Thyroid gland (tissue), 4 donors: ENCODE measurements at regions of chr1 and their contacts with region 1.

Region 1: GRCh38 chr1:53945433-53946251 is at the start of gene IFT25:
- DNase-seq: peak; percentile 97
- H3K4me3 ChIP-seq: peak within 1 kb of the TSS; percentile 61 to 87 (median 76)
- H3K27ac ChIP-seq: peak within 1 kb of the TSS; percentile 68 to 87 (median 85)
- H3K4me1 ChIP-seq: peaks cover 22 to 45% of the 10 kb centered on the region in 2 donors
- H3K27me3 ChIP-seq: no peaks in the 10 kb centered on the region
- CTCF ChIP-seq: no peak
- POLR2A ChIP-seq: peak in 1 of 2 donors; percentile 84
- total RNA-seq, gene IFT25: 42.4 to 116 (median 77.7) TPM

Region 2: DNA sequence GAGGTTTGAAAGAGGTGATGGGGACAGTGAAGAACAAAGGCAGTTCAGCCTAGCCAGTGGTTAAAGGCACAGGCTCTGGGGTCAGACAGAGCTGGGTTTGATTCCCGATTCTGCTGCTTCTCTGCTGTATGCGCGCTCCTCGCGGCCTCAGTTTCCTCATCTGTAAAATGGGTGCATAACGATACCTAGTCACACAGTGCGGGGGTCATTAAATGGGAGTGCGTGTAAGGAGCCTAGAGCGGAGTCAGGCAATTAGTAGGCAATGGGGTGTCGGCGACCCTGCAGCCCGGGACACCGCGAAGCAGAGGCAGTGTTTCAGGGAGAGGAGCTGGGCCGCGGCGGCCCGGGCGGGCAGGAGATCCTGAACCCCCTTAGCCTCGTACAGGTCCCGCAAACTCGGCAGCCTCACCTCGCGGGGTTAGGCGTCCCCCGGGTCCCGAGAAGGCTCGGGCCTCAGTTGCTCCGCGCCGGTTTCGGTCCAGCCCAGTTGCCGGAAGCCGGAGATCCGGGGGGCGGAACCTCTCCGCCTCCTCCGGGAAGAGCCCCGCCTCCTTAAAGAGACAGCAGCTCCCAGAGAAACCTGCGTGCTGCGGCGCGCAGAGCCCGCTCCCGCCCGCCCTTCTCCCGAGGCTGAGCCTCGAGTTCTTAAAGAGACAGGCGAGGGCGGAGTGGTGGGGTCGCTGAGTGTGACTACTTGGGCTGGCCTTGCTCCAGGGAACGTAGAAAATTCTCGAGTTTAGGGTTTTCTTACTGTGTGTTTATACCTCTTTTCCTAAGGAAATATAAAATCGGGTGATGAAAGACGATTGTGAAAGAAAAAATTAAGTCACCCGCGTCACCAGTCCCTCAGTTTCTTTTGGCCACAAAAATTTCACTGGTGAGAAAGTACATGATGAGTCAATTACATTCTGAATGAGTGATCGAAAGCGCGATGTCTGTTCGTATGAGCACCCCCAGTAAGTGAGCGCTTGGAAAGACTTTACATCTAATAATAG is 56.0 kb before region 1 on chr1 and contains the start of gene YIPF1:
- intact Hi-C with region 1: loop called (anchors 2 kb)
- DNase-seq: peak; percentile 92 to 94
- H3K4me3 ChIP-seq: peak within 1 kb of the TSS; percentile 76 to 95 (median 90)
- H3K27ac ChIP-seq: peak within 1 kb of the TSS; percentile 67 to 75 (median 73)
- H3K4me1 ChIP-seq: peaks cover 9 to 30% of the 10 kb centered on the region in 2 donors
- H3K27me3 ChIP-seq: no peaks in the 10 kb centered on the region
- CTCF ChIP-seq: peak in 1 of 6 experiments; percentile 18
- POLR2A ChIP-seq: peak in 1 of 2 donors; percentile 55
- total RNA-seq, gene YIPF1: 41.5 to 66.6 (median 61.5) TPM

Region 3: DNA sequence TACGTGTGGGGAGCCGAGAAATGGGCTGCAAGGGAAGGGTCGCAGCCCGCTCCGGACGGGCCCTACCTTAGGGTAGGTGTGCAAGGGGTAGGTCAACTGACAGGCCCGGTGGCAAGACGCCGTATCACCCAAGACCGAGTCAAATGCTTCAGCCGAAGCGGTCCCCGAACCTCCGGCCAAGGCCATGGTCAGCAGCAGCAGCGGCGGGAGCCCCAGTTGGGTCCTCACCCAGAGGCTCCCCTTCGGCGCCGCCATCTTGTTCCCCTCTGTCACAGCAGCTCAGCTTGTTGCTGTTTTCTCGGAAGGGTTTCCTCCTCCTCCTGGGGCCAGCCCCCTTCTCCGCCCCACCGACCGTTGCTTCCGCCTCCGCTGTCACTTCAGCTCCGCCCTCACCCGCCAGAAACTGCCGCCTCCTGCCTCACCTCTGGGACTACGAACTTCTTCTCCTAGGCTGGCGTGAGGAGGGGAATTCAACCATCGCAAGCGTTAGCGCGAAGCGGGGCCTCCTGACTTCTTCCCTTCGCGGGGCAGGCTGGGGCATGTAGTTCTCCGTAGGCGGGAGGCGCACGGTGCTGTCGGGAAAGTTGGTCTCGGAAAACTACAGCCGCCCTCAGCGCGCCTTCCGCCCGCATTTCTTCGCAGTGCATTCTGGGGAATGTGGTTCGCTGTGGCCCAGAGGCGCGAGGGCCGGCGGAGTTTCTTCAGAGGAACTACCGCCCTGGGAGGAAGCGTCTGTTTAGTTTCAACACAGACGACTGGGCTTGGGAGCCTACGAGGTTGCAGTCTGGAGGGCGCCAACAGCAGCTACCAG is 107.5 kb after region 1 on chr1 and contains the starts of genes TCEANC2 and TMEM59:
- intact Hi-C with region 1: loop called (anchors 5 kb)
- DNase-seq: peak; percentile 98 to 99
- H3K4me3 ChIP-seq: peak within 1 kb of the TSS; percentile 59 to 88 (median 73)
- H3K27ac ChIP-seq: peak within 1 kb of the TSS; percentile 81 to 86 (median 85)
- H3K4me1 ChIP-seq: peaks cover 17 to 33% of the 10 kb centered on the region in 2 donors
- H3K27me3 ChIP-seq: no peaks in the 10 kb centered on the region
- CTCF ChIP-seq: no peak
- POLR2A ChIP-seq: peak in 1 of 2 donors; percentile 88
- total RNA-seq, gene TCEANC2: 4.3 to 5.8 (median 4.4) TPM
- total RNA-seq, gene TMEM59: 337 to 492 (median 444) TPM